ENCODE measurements at regions of chr19 and their contacts with region 1.

Region 1: GRCh38 chr19:45558399-45558878 is 26.2 kb downstream of the OPA3 start:
- DNase-seq: peak; percentile 88
- H3K4me3 Mint-ChIP-seq: no peak overlapping the region
- H3K27ac Mint-ChIP-seq: no peak overlapping the region
- H3K4me1 Mint-ChIP-seq: peaks cover 30% of the 10 kb centered on the region
- H3K27me3 Mint-ChIP-seq: no peaks in the 10 kb centered on the region

Region 2: GRCh38 chr19:45423589-45424190 is 134.7 kb before region 1 on chr19 and contains the start of gene ERCC1:
- CTCF ChIA-PET with region 1: no interaction called
- intact Hi-C with region 1: loop called (anchors 5 kb)
- DNase-seq: peak; percentile 90
- H3K4me3 Mint-ChIP-seq: peak within 1 kb of the TSS; percentile 94
- H3K27ac Mint-ChIP-seq: peak within 1 kb of the TSS; percentile 90
- H3K4me1 Mint-ChIP-seq: peaks cover 63% of the 10 kb centered on the region
- H3K27me3 Mint-ChIP-seq: peaks cover 3% of the 10 kb centered on the region
- total RNA-seq, gene ERCC1: 28.9 to 30.7 TPM

Region 3: GRCh38 chr19:45523642-45524256 is 34.7 kb before region 1 on chr19:
- CTCF ChIA-PET with region 1: interaction called, 8 read pairs
- intact Hi-C with region 1: loop called (anchors 1 kb)
- DNase-seq: peak; percentile 82
- H3K4me3 Mint-ChIP-seq: no peak overlapping the region
- H3K27ac Mint-ChIP-seq: peak overlapping the region; percentile 55
- H3K4me1 Mint-ChIP-seq: peaks cover 18% of the 10 kb centered on the region
- H3K27me3 Mint-ChIP-seq: no peaks in the 10 kb centered on the region

Region 4: DNA sequence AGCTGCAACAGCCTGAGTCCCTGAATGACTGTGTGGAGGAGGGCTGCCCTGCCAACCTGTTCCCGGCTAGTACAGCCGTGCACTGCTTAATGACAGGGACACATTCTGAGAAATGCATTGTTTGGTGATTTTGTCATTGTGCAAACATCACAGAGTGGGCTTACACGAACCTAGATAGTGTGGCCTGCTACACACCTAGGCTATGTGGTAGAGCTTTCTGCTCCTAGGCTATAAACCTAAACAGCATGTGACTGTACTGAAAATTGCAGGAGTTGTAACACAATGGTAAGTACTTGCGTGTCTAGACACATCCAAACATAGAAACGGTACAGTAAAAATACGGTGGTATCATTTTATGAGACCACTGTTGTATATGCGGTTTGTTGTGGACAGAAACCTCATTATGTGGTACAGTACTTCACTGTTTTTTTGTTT is 16.2 kb before region 1 on chr19:
- CTCF ChIA-PET with region 1: interaction called, 15 read pairs
- intact Hi-C with region 1: no loop called
- DNase-seq: no peak
- H3K4me3 Mint-ChIP-seq: no peak overlapping the region
- H3K27ac Mint-ChIP-seq: no peak overlapping the region
- H3K4me1 Mint-ChIP-seq: peaks cover 7% of the 10 kb centered on the region
- H3K27me3 Mint-ChIP-seq: no peaks in the 10 kb centered on the region

Measured in activated naive CD4-positive, alpha-beta T cell treated with anti-CD3 and anti-CD28 coated beads for 36 hours (primary cell).